Activated naive CD4-positive, alpha-beta T cell treated with anti-CD3 and anti-CD28 coated beads for 36 hours (primary cell): ENCODE measurements at regions of chr11 and their contacts with region 1.

Region 1: DNA sequence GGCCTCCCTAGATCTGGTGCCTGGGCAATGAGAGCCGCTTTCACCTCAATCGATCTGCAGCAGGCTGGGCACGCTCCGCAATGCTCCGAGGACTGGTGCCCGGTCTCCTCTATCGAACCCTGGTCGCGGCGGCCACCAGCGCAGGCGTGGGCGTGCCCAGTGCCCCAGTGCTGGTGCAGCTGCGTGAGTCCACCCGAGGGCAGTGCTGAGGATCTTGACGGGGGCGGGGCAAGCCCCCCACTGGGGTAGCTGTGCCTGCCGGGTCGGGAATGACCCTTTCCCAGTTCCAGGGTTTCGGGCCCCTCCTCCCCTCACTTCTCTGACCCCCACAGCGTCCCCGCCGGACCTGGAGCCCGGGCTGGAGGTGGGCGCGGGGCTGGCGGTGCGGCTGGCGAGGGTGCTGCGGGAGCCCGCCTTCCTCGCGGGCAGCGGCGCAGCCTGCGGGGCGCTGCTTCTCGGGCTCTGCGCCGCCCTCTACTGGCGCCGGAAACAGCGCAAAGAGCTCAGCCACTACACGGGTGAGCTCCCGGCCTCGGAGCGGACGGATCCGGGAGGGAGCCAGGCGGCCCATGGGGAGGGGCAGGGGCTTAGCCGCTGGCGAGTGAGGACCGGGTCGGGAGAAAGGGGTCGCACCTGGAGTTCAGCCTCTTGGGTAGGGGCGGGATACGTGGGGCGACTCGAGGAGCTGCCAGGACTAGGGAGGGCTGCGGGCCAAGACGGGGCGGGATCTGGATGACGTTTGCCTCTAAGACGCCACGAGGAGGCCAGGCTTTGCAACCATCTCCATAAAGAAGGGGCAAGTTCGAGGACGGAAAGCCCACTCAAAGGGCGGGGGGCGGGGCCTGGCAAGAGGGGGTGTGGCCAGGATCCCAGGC is 10.9 kb downstream of the ROBO3 start:
- DNase-seq: peak; percentile 86
- H3K4me3 Mint-ChIP-seq: peak overlapping the region; percentile 83
- H3K27ac Mint-ChIP-seq: peak overlapping the region; percentile 73
- H3K4me1 Mint-ChIP-seq: peaks cover 19% of the 10 kb centered on the region
- H3K27me3 Mint-ChIP-seq: peaks cover 23% of the 10 kb centered on the region

Region 2: GRCh38 chr11:124746621-124747243 is 129.4 kb before region 1 on chr11:
- CTCF ChIA-PET with region 1: interaction called, 5 read pairs
- intact Hi-C with region 1: loop called (anchors 2 kb)
- DNase-seq: peak; percentile 76
- H3K4me3 Mint-ChIP-seq: peak overlapping the region; percentile 83
- H3K27ac Mint-ChIP-seq: peak overlapping the region; percentile 75
- H3K4me1 Mint-ChIP-seq: peaks cover 14% of the 10 kb centered on the region
- H3K27me3 Mint-ChIP-seq: no peaks in the 10 kb centered on the region

Region 3: DNA sequence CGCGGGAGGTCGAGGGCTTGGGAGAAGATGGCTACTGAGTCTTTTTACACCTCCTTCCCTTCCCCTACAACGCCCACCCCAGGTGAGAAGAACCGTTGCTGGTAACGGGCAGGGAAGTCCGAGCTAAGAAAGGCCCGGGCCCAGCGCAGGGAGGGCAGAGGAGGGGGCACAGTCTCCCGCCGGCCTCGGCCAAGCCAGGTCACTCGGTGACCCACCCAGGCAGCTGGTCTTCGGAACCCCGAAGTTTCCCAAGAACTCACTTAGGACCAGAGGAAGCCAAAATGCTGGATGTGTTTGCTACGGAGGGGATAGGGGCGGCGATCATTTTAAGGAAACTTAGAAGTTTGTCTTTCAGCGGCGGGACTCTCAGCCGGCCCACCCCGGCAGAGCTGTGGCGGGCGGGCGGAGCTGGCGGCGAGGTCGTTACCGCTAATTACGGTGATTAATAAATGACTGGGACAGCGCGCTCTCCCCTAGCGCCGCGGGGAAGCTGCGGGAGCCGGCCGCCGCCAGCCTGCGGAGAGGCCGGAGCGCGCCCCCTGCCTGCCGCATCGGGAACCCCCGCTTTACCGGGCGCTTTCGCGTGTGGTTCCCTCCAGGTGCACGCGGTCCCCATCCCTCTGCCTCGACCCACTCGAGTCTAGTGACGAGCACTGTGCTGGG is 10.1 kb before region 1 on chr11:
- CTCF ChIA-PET with region 1: interaction called, 11 read pairs
- intact Hi-C with region 1: loop called (anchors 1 kb)
- DNase-seq: peak; percentile 62
- H3K4me3 Mint-ChIP-seq: peak overlapping the region; percentile 42
- H3K27ac Mint-ChIP-seq: no peak overlapping the region
- H3K4me1 Mint-ChIP-seq: peaks cover 37% of the 10 kb centered on the region
- H3K27me3 Mint-ChIP-seq: peaks cover 92% of the 10 kb centered on the region

Region 4: DNA sequence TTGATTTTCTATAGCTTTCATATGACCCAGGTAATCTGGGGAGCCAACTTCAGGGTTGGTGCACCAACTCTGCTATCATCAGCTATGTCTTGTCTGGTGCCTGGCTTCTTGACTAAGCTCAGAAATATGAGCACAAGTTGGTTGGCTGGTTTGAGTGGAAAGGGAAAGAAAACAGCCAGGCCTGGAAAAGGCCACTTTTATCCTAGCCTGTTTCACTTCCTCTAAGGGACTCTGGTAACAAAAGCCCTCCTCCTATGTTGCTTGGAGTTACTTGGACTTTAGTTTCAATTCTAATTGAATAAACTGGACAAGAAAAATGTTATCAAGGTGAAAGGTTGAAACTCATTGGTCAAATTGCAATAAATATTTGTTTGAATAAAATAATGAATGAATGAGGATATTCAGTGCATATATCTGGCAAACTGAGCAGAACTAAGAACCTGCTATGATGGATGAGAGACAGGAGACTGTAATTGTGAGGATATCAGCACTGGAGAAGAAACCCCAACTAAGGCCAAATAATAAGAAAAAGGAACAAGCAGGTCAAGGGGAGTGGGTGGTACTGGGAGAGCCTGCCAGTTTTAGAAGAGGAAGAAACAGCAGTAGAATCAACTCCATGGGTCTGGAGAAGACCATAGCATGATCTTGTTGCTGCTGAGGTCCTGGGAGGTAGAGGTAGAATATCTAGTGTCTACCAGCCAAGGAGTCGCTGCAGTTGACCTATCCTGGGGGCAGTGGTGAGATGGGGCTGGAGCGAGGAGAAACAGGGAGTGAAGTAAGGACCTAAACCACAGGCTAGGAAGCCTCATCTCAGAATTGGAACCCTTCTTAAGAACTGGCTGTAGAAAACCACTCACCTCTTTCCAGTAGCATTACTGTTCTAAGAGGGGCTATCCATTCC is 13.3 kb after region 1 on chr11:
- CTCF ChIA-PET with region 1: interaction called, 10 read pairs
- intact Hi-C with region 1: no loop called
- DNase-seq: no peak
- H3K4me3 Mint-ChIP-seq: no peak overlapping the region
- H3K27ac Mint-ChIP-seq: no peak overlapping the region
- H3K4me1 Mint-ChIP-seq: peaks cover 2% of the 10 kb centered on the region
- H3K27me3 Mint-ChIP-seq: peaks cover 2% of the 10 kb centered on the region

Region 5: GRCh38 chr11:124920870-124921609 is 44.9 kb after region 1 on chr11:
- CTCF ChIA-PET with region 1: interaction called, 8 read pairs
- intact Hi-C with region 1: loop called (anchors 2 kb)
- DNase-seq: peak; percentile 83
- H3K4me3 Mint-ChIP-seq: peak overlapping the region; percentile 55
- H3K27ac Mint-ChIP-seq: no peak overlapping the region
- H3K4me1 Mint-ChIP-seq: peaks cover 22% of the 10 kb centered on the region
- H3K27me3 Mint-ChIP-seq: no peaks in the 10 kb centered on the region

Region 6: DNA sequence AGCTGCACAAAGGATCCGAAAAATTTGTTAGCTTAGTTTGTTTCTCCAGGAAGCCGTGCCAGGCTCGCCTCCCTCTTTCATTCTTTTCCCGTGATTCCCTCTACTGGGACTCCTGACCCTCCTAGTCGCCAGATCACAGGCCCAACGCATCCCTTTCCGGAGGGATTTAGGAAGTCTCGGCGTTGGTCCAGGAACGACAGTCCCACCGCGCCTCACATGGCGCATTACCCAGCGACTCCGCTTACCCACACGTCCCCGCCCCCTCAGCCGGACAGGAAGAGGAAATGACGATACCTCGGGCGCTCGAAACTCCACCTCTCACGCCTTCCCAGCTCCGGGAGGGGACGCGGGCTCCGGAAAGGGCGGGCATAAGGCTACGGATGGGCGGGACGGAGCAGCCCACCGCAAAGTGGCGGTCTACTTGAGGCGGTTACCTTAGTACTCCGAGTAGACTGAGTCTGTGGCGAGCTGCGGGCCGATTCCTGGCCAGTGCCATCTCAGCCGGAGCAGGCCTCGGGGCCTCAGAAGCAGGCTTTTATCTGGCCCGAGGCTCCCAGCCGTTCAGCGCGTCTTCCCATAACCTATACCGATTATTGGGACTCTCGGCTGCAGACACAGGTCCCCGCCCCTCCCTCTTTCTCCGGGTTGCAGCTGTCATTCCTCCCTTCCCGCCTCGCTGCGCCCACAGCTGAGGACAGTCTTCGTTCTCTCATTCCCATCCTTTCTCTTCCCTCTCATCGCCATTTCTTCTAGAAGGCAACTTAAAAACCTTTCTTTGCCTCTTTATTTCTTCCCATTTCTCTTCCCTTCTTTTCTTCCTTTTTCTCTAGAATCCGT is 77.8 kb after region 1 on chr11 and contains the start of gene CCDC15:
- CTCF ChIA-PET with region 1: interaction called, 8 read pairs
- intact Hi-C with region 1: loop called (anchors 1 kb)
- DNase-seq: peak; percentile 97
- H3K4me3 Mint-ChIP-seq: no peak within 1 kb of the TSS
- H3K27ac Mint-ChIP-seq: no peak within 1 kb of the TSS
- H3K4me1 Mint-ChIP-seq: peaks cover 7% of the 10 kb centered on the region
- H3K27me3 Mint-ChIP-seq: no peaks in the 10 kb centered on the region
- total RNA-seq, gene CCDC15: 6.1 to 7.3 TPM

Region 7: DNA sequence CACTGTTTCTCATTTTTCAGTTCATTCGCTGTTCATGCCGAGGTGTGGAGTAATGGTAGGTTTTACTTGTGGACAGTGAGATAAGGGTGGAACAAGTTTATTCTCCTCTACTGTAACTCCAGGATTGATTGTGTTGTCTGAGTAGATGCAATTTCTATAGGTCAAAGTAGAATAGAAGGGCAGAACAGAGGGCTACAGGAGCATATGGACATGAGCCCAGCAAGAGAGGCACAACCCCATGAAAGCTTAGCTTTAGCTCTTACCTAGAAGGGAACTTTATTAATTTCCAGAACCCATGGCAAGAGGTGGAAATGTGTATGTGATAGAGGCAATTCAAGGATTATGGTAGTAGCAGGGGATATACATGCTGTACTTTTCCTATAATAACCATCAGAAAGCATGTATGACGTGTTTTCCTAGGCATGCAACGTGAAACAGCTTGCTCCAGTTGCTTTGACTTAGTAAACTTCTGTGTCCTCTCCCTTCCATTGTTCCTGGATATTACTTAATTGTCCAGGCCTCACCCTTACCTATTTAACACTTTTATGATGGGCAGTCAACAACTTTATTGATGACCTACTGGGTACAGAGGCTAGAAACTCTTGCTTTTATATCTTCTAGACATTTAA is 173.1 kb after region 1 on chr11:
- CTCF ChIA-PET with region 1: no interaction called
- intact Hi-C with region 1: no loop called
- DNase-seq: no peak
- H3K4me3 Mint-ChIP-seq: no peak overlapping the region
- H3K27ac Mint-ChIP-seq: no peak overlapping the region
- H3K4me1 Mint-ChIP-seq: no peaks in the 10 kb centered on the region
- H3K27me3 Mint-ChIP-seq: no peaks in the 10 kb centered on the region

Region 8: DNA sequence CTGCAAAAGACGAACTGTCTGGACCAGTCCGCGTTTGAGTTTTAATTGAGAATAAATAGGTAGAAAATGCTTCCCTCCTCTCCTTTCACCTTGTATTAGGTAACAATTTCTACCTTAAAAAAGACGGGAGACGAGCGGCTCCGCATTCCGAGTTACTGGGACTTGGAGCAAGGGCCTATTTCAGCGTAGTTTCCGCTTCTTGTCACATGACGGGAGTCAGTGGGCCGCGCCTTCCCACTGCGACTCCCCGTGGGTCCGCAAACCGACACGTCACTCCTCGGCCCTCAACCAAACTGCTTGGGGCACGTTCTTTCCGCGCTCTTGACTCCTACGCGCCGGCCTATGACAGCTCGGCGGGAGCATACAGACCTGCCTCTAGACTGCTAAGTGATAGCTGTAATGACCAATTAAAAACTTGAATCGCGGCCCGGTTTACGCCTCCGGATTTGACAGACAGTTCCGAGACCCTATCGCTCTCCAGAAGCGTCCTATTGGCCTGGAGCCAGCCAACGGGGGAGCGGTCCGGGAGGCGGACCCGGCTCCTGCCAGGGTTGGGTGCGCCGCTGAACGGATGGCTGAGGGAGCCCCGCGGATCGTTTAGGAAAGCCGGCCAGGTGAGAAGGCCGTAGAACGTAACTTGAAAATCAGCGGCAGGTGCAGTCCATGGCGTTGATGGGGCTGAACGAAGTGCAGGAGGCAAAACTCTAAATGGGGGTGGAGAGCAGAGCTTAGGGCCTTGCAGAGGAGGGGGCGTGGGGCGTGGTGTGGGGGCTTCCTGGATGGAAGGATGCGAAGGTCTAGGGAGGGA is 716.3 kb after region 1 on chr11 and contains the start of gene STT3A:
- CTCF ChIA-PET with region 1: no interaction called
- intact Hi-C with region 1: loop called (anchors 5 kb)
- DNase-seq: peak; percentile 99
- H3K4me3 Mint-ChIP-seq: peak within 1 kb of the TSS; percentile 100
- H3K27ac Mint-ChIP-seq: peak within 1 kb of the TSS; percentile 92
- H3K4me1 Mint-ChIP-seq: peaks cover 51% of the 10 kb centered on the region
- H3K27me3 Mint-ChIP-seq: no peaks in the 10 kb centered on the region
- total RNA-seq, gene STT3A: 111 to 113 TPM